CD4-positive, alpha-beta T cell (primary cell): ENCODE measurements at regions of chr7 and their contacts with region 1.

Region 1: DNA sequence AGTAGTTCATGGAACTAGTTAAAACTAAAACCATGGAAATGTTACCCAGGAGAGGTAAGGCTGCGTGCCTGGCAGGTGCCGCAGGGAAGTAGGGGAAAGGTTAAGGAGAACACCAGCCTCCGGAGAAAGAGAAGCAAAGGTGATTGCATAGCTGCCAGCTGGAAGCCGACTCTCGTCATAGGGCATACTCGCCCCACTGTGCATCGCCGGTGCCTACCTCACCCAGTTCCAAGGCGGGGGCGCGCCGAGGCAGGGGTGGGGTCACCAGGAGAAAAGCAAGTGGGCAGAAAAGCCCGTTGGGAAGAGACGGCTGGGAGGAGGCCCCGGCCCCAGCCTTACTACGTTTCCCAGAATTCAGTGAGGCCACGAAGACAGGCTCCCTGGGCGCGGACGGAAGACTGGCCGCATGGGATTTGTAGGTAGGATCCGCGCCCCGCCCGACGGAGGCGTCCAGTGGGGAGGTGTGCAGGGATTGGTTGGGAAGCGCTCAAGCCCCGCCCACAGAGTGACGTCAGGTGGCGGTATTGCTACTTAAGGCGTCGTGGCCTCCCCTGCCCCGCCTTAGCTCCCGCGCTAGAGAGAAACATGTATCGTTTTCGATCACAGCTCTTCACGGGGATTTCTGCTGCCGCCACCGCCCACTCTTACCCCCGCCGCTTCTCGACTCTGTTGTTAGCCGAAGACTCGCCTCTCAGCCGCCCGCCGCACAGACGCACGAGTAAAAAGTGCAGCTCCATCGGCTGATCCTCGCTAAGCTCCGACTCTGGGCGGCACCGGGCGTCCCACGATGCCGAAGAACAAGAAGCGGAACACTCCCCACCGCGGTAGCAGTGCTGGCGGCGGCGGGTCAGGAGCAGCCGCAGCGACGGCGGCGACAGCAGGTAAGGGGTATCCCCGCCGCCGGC is at the start of gene IFRD1:
- DNase-seq: peak; percentile 95 to 100 (median 98)
- ATAC-seq: peak; percentile 82
- H3K4me3 ChIP-seq: peak within 1 kb of the TSS; percentile 91
- H3K4me3 Mint-ChIP-seq: peak within 1 kb of the TSS; percentile 100
- H3K27ac ChIP-seq: peak within 1 kb of the TSS; percentile 98 to 100
- H3K27ac Mint-ChIP-seq: peak within 1 kb of the TSS; percentile 99
- H3K4me1 ChIP-seq: peaks cover 28% of the 10 kb centered on the region
- H3K4me1 Mint-ChIP-seq: peaks cover 51% of the 10 kb centered on the region
- H3K27me3 ChIP-seq: no peaks in the 10 kb centered on the region
- H3K27me3 Mint-ChIP-seq: no peaks in the 10 kb centered on the region
- CTCF ChIP-seq: no peak
- total RNA-seq, gene IFRD1: 198 to 205 TPM

Region 2: DNA sequence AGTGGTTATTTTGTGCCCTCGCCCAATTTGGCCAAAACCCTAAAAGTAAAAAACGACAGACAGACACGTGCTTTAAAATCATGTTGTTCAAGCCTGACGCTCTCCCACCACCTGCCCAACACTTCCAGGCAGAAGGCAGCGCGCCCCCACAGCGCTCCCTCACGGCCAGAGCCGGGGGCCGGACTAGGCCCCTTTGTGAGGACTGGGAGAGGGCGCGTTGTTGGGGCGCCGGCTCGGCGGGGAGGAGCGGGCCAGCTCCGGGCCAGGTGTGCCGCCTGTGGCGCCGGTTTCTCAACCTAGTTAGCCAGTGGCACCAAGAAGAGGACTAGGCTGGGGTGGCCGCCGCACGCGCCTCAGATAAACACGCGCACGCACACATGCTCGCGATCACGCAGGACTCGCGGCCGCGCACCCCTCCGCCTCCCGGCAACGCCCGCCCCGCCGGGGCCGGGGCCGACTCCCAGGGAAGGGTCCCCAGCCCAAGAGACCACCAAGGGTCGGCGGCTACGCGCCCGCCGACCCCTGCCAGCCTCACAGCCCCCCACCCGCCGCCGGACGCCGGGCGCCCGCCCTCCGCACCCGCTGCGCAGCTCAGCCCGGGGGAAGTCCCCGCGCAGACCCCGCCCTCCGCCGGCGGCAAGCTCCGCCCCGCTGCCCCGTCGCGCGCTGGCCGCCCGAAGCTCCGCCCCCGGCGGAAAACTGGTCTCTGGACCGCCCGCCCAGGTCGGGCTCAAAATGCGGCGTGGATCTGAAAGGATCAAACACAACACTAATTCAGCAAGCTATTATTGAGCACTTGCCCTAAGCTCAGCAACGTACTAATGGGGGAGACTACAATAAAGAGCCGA is 888.0 kb before region 1 on chr7 and contains the start of gene IMMP2L:
- CTCF ChIA-PET with region 1: no interaction called
- POLR2A ChIA-PET with region 1: interaction called, 16 read pairs
- intact Hi-C with region 1: loop called in 1 of 2 experiments (anchors 5 kb)
- DNase-seq: peak; percentile 72 to 94 (median 89)
- ATAC-seq: peak; percentile 91
- H3K4me3 ChIP-seq: peak within 1 kb of the TSS; percentile 68
- H3K4me3 Mint-ChIP-seq: peak within 1 kb of the TSS; percentile 97
- H3K27ac ChIP-seq: peak within 1 kb of the TSS in 1 of 2 donors; percentile 72
- H3K27ac Mint-ChIP-seq: peak within 1 kb of the TSS; percentile 93
- H3K4me1 ChIP-seq: peaks cover 19% of the 10 kb centered on the region
- H3K4me1 Mint-ChIP-seq: peaks cover 43% of the 10 kb centered on the region
- H3K27me3 ChIP-seq: peaks cover 0 to under 1% of the 10 kb centered on the region in 2 experiments
- H3K27me3 Mint-ChIP-seq: peaks cover 6% of the 10 kb centered on the region
- CTCF ChIP-seq: no peak
- total RNA-seq, gene IMMP2L: 8.9 to 18.7 TPM

Region 3: GRCh38 chr7:112192236-112193154 is 257.7 kb before region 1 on chr7:
- CTCF ChIA-PET with region 1: no interaction called
- POLR2A ChIA-PET with region 1: no interaction called
- intact Hi-C with region 1: no loop called
- DNase-seq: no peak
- ATAC-seq: no peak
- H3K4me3 ChIP-seq: no peak overlapping the region
- H3K4me3 Mint-ChIP-seq: no peak overlapping the region
- H3K27ac ChIP-seq: no peak overlapping the region
- H3K27ac Mint-ChIP-seq: no peak overlapping the region
- H3K4me1 ChIP-seq: no peaks in the 10 kb centered on the region
- H3K4me1 Mint-ChIP-seq: no peaks in the 10 kb centered on the region
- H3K27me3 ChIP-seq: peaks cover 6 to 26% of the 10 kb centered on the region in 2 experiments
- H3K27me3 Mint-ChIP-seq: peaks cover 39% of the 10 kb centered on the region
- CTCF ChIP-seq: no peak

Region 4: GRCh38 chr7:112322070-112322469 is 128.1 kb before region 1 on chr7:
- CTCF ChIA-PET with region 1: no interaction called
- POLR2A ChIA-PET with region 1: no interaction called
- intact Hi-C with region 1: no loop called
- DNase-seq: no peak
- ATAC-seq: no peak
- H3K4me3 ChIP-seq: no peak overlapping the region
- H3K4me3 Mint-ChIP-seq: no peak overlapping the region
- H3K27ac ChIP-seq: no peak overlapping the region
- H3K27ac Mint-ChIP-seq: no peak overlapping the region
- H3K4me1 ChIP-seq: no peaks in the 10 kb centered on the region
- H3K4me1 Mint-ChIP-seq: no peaks in the 10 kb centered on the region
- H3K27me3 ChIP-seq: no peaks in the 10 kb centered on the region
- H3K27me3 Mint-ChIP-seq: no peaks in the 10 kb centered on the region
- CTCF ChIP-seq: no peak

Region 5: DNA sequence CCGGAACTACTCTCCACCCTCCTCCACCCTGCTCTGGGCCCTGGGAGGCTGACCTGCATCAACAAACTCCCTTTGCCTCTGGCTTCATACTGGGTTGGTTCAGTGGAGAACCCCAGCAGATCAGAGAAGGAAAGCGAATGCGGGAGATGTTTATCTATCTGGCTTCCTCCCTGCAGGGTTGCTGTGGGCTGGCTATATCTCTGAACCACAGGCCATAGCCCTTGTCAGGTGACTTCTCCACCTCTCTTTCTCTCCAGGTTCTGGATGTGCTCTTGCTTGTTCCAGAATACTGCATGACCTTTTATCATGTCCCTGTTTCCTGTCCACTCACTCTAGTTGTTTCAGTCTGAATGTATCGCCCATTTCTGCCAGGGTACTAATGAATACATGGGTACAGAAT is 51.6 kb before region 1 on chr7:
- CTCF ChIA-PET with region 1: no interaction called
- POLR2A ChIA-PET with region 1: interaction called, 3 read pairs
- intact Hi-C with region 1: loop called (anchors 2 to 10 kb)
- DNase-seq: peak in 4 of 14 experiments; percentile 21 to 57 (median 54)
- ATAC-seq: peak; percentile 80
- H3K4me3 ChIP-seq: no peak overlapping the region
- H3K4me3 Mint-ChIP-seq: peak overlapping the region; percentile 46
- H3K27ac ChIP-seq: peak overlapping the region in 1 of 2 donors; percentile 10
- H3K27ac Mint-ChIP-seq: peak overlapping the region; percentile 12
- H3K4me1 ChIP-seq: peaks cover 12% of the 10 kb centered on the region
- H3K4me1 Mint-ChIP-seq: peaks cover 36% of the 10 kb centered on the region
- H3K27me3 ChIP-seq: no peaks in the 10 kb centered on the region
- H3K27me3 Mint-ChIP-seq: no peaks in the 10 kb centered on the region
- CTCF ChIP-seq: no peak

Region 6: GRCh38 chr7:112462236-112462635 is 12.1 kb after region 1 on chr7:
- CTCF ChIA-PET with region 1: no interaction called
- POLR2A ChIA-PET with region 1: interaction called, 20 read pairs
- intact Hi-C with region 1: no loop called
- DNase-seq: peak in 2 of 14 experiments; percentile 35 to 38
- ATAC-seq: no peak
- H3K4me3 ChIP-seq: no peak overlapping the region
- H3K4me3 Mint-ChIP-seq: no peak overlapping the region
- H3K27ac ChIP-seq: no peak overlapping the region
- H3K27ac Mint-ChIP-seq: no peak overlapping the region
- H3K4me1 ChIP-seq: no peaks in the 10 kb centered on the region
- H3K4me1 Mint-ChIP-seq: peaks cover 5% of the 10 kb centered on the region
- H3K27me3 ChIP-seq: no peaks in the 10 kb centered on the region
- H3K27me3 Mint-ChIP-seq: no peaks in the 10 kb centered on the region
- CTCF ChIP-seq: no peak

Region 7: GRCh38 chr7:112939574-112940314 is 489.6 kb after region 1 on chr7:
- CTCF ChIA-PET with region 1: no interaction called
- POLR2A ChIA-PET with region 1: interaction called, 27 read pairs
- intact Hi-C with region 1: loop called (anchors 5 to 10 kb)
- DNase-seq: peak; percentile 98 to 100 (median 99)
- ATAC-seq: peak; percentile 95
- H3K4me3 ChIP-seq: peak overlapping the region; percentile 83
- H3K4me3 Mint-ChIP-seq: peak overlapping the region; percentile 98
- H3K27ac ChIP-seq: peak overlapping the region; percentile 53 to 66
- H3K27ac Mint-ChIP-seq: peak overlapping the region; percentile 88
- H3K4me1 ChIP-seq: peaks cover 18% of the 10 kb centered on the region
- H3K4me1 Mint-ChIP-seq: peaks cover 53% of the 10 kb centered on the region
- H3K27me3 ChIP-seq: no peaks in the 10 kb centered on the region
- H3K27me3 Mint-ChIP-seq: no peaks in the 10 kb centered on the region
- CTCF ChIP-seq: no peak

Region 8: DNA sequence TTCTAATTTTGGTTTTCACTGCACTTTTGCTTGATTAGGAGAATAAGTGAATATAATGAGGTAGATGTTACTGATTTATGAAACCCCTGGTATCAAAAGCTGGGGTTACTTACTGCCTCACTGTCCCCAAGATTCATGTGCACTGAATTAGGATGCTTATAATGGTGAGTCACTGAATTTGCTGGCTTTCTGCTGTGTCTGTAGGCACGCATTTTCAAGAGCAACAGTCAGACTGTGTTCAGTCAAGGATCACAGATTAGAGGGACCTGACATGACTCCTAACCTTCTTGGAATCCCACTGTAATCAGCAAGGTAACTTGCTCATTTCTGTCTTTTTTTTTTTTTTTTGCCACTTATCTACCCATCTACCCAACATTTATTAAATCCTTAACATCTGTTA is 576.8 kb after region 1 on chr7:
- CTCF ChIA-PET with region 1: no interaction called
- POLR2A ChIA-PET with region 1: no interaction called
- intact Hi-C with region 1: no loop called
- DNase-seq: no peak
- ATAC-seq: no peak
- H3K4me3 ChIP-seq: no peak overlapping the region
- H3K4me3 Mint-ChIP-seq: no peak overlapping the region
- H3K27ac ChIP-seq: no peak overlapping the region
- H3K27ac Mint-ChIP-seq: no peak overlapping the region
- H3K4me1 ChIP-seq: no peaks in the 10 kb centered on the region
- H3K4me1 Mint-ChIP-seq: no peaks in the 10 kb centered on the region
- H3K27me3 ChIP-seq: no peaks in the 10 kb centered on the region
- H3K27me3 Mint-ChIP-seq: peaks cover 15% of the 10 kb centered on the region
- CTCF ChIP-seq: no peak